ENCODE measurements at regions of chr10 and their contacts with region 1.

Region 1: GRCh38 chr10:76469675-76470074 is 1038.3 kb downstream of the LRMDA start:
- DNase-seq: no peak
- H3K4me3 ChIP-seq: no peak overlapping the region
- CTCF ChIP-seq: no peak

Region 2: DNA sequence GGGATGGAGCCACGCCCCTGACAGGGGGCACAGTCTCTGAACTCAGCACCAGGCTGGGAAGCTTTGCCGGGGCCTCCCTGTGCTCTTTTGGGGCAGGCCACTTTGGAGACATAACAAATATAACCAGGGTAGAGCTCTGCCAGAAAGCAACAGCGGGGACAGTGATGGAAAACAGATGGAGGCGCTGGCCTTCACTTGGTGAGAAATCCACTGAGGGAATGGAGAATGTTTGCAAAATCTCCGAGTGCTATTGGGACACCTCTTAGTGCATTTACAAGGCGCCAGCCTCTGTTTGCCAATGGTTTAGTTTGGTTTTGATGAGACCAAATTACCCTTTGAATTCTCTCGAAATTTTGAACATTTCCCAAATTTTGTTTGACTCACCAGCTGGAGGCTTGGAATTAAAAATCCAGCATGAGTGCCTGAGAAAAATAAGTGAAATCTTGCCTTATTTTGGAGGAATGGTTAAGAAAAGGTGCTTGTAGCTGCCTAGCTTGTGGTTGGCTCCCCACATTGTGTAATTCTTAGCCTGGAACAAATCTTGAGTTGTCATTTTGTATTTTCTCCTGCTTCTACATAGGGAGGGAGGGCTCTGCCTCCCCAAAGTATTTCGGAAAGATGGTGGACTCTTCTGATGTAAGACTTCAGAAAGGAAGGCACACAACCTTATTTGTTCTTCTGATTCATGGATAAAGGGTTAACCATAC is 57.8 kb before region 1 on chr10:
- in situ Hi-C with region 1: no loop called
- DNase-seq: no peak
- H3K4me3 ChIP-seq: no peak overlapping the region
- CTCF ChIP-seq: no peak

Region 3: GRCh38 chr10:76514869-76515268 is 45.2 kb after region 1 on chr10:
- in situ Hi-C with region 1: loop called (anchors 5 kb)
- DNase-seq: no peak
- H3K4me3 ChIP-seq: no peak overlapping the region
- CTCF ChIP-seq: no peak